ENCODE measurements at regions of chr6 and their contacts with region 1.

Region 1: DNA sequence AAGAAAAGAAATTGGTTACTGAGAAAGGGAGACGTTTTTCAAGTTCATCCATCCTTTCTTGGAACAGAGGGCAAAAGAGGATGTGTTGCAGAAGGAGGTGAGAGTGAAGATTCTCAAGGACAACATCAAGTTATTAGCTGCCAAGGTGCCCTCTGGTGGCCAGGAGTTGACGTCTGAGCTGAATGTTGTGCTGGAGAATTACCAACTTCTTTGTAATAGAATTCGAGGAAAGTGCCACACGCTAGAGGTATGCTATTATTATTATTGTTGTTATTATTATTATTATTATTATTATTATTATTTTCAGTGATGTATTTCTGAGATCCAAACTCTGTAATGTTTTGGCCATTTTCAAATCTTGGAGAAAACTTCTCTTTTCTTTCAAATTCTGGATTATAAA is 197.0 kb downstream of the UTRN start:
- DNase-seq: peak; percentile 54 to 83
- ATAC-seq: peak; percentile 56 to 86 (median 78)
- H3K4me3 ChIP-seq: no peak overlapping the region
- H3K4me3 Mint-ChIP-seq: no peak overlapping the region
- H3K27ac ChIP-seq: no peak overlapping the region
- H3K27ac Mint-ChIP-seq: peak overlapping the region; percentile 56 to 72
- H3K4me1 ChIP-seq: no peaks in the 10 kb centered on the region
- H3K4me1 Mint-ChIP-seq: peaks cover 19 to 37% of the 10 kb centered on the region in 2 donors
- H3K27me3 ChIP-seq: no peaks in the 10 kb centered on the region
- H3K27me3 Mint-ChIP-seq: no peaks in the 10 kb centered on the region
- CTCF ChIP-seq: peak; percentile 71

Region 2: DNA sequence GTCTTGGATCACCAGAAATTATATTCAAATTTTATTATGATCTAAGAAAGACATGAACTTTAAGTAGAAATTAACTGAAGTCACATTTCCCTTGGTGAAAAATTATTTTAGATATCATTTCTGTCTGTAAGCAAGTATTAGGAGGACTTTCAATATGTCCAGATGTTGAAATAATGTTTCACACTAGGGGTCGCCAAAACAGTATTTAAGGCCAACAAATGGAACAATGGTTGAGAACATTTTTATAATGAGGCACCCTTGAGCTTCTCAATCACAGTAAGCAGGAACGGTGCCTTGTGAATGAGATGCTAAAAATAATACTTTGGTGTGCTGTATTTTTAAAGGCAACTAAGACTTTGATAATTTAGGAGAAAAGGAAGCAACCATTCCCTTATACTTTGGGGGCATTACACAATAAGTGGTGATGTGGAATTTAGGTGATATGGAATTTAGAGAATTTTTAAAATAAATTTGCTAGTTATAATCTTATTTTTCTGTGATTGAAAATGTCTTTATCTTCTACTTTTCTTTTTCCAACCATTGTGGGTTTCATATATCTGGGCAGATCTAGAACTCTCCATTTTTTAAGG is 377.1 kb before region 1 on chr6:
- intact Hi-C with region 1: loop called (anchors 1 kb)
- DNase-seq: peak in 1 of 2 donors; percentile 85
- ATAC-seq: peak; percentile 79 to 88 (median 87)
- H3K4me3 ChIP-seq: no peak overlapping the region
- H3K4me3 Mint-ChIP-seq: no peak overlapping the region
- H3K27ac ChIP-seq: no peak overlapping the region
- H3K27ac Mint-ChIP-seq: peak overlapping the region in 1 of 2 donors; percentile 32
- H3K4me1 ChIP-seq: no peaks in the 10 kb centered on the region
- H3K4me1 Mint-ChIP-seq: peaks cover 5% of the 10 kb centered on the region in 2 donors
- H3K27me3 ChIP-seq: no peaks in the 10 kb centered on the region
- H3K27me3 Mint-ChIP-seq: no peaks in the 10 kb centered on the region
- CTCF ChIP-seq: peak; percentile 94

Region 3: GRCh38 chr6:144519426-144519825 is 37.3 kb after region 1 on chr6:
- intact Hi-C with region 1: no loop called
- DNase-seq: no peak
- ATAC-seq: no peak
- H3K4me3 ChIP-seq: no peak overlapping the region
- H3K4me3 Mint-ChIP-seq: no peak overlapping the region
- H3K27ac ChIP-seq: no peak overlapping the region
- H3K27ac Mint-ChIP-seq: peak overlapping the region; percentile 14 to 46
- H3K4me1 ChIP-seq: no peaks in the 10 kb centered on the region
- H3K4me1 Mint-ChIP-seq: peaks cover under 1% of the 10 kb centered on the region in 2 donors
- H3K27me3 ChIP-seq: no peaks in the 10 kb centered on the region
- H3K27me3 Mint-ChIP-seq: no peaks in the 10 kb centered on the region
- CTCF ChIP-seq: no peak

Region 4: GRCh38 chr6:144823131-144823530 is 341.0 kb after region 1 on chr6:
- intact Hi-C with region 1: no loop called
- DNase-seq: no peak
- ATAC-seq: no peak
- H3K4me3 ChIP-seq: no peak overlapping the region
- H3K4me3 Mint-ChIP-seq: no peak overlapping the region
- H3K27ac ChIP-seq: no peak overlapping the region
- H3K27ac Mint-ChIP-seq: peak overlapping the region; percentile 55 to 58
- H3K4me1 ChIP-seq: no peaks in the 10 kb centered on the region
- H3K4me1 Mint-ChIP-seq: peaks cover 19 to 29% of the 10 kb centered on the region in 2 donors
- H3K27me3 ChIP-seq: no peaks in the 10 kb centered on the region
- H3K27me3 Mint-ChIP-seq: no peaks in the 10 kb centered on the region
- CTCF ChIP-seq: no peak

Measured in natural killer cell (primary cell).